Posterior vena cava (tissue), 2 donors: ENCODE measurements at regions of chr10 and their contacts with region 1.

Region 1: DNA sequence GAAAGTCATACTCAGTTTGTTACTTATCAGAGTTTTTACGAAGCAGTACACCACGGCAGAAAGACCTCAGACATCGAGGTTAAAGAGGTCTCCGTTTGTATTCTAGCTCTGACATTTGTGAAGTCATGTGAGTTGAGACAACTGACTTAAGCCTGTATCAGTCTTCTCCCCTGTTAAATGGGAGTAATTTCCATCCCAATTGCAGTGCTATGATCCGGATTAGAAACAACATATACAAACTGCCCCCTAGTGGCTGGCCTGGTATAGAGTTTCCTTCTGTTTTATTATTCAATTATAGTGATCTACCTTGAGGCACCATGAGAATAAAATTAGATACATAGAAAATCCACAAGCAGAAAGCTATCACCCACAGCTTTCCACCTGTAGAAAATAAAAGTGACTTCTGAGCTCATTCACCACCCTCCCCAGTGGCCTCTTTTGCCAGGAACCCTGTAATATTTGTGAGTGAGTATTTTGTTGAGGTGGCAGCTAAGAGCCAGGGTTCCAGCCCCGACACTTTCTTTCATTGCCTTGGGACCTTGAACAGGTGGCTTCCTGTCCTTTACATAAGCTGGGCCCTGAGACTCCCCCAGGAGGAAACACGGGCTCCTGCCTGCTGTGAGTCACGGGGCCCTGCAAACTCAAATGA is 607.2 kb upstream of the MGMT start:
- DNase-seq: no peak

Region 2: GRCh38 chr10:128870830-128871597 is 11.2 kb after region 1 on chr10:
- intact Hi-C with region 1: loop called in 1 of 2 experiments (anchors 1 kb)
- DNase-seq: peak; percentile 64